ENCODE measurements at regions of chr7 and their contacts with region 1.

Region 1: DNA sequence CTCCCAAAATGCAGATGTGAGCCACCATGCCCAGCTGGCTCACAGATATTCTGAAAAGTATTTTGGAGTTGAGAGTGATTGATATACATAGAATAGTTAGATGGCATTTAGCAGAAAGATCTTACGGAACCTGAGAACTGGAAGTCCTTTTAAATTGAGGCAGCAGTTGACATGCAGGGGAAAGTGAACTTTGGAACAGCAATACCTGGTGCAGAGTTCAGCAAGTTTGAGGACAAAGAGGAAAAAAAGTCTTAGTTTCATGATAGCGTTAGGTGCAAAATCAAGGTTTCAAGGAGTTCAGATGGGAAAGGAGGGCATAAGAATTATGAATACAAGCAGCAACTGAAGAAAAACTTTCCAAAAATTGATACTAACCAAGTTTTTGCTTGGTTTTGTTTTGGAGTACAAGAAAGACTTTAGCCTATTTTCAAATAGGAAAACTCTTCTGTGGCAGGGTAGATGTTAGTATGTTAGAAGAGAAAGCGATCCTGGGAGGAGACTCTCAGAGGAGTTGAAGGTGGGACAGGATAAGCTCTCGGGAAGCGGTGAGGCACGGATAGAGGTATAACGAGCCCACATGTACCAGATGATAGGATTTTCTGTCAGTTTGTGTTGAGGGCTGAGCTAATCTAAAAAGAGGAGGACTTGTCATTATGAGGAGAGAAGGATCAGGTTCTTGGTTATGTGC is 28.0 kb upstream of the STMP1 start:
- DNase-seq: no peak
- ATAC-seq: no peak
- H3K4me3 ChIP-seq: no peak overlapping the region
- H3K27ac ChIP-seq: no peak overlapping the region
- H3K4me1 ChIP-seq: no peaks in the 10 kb centered on the region
- H3K27me3 ChIP-seq: no peaks in the 10 kb centered on the region
- CTCF ChIP-seq: no peak
- POLR2A ChIP-seq: no peak

Region 2: GRCh38 chr7:135575296-135575695 is 59.0 kb before region 1 on chr7:
- intact Hi-C with region 1: loop called in 1 of 10 experiments (anchors 10 kb)
- DNase-seq: no peak
- ATAC-seq: no peak
- H3K4me3 ChIP-seq: no peak overlapping the region
- H3K27ac ChIP-seq: no peak overlapping the region
- H3K4me1 ChIP-seq: peaks cover 0 to 5% (median 0%) of the 10 kb centered on the region in 12 donors
- H3K27me3 ChIP-seq: no peaks in the 10 kb centered on the region
- CTCF ChIP-seq: no peak
- POLR2A ChIP-seq: no peak

Measured in heart left ventricle (tissue), 16 donors.